K562 (cell line): ENCODE measurements at regions of chr13 and their contacts with region 1.

Region 1: DNA sequence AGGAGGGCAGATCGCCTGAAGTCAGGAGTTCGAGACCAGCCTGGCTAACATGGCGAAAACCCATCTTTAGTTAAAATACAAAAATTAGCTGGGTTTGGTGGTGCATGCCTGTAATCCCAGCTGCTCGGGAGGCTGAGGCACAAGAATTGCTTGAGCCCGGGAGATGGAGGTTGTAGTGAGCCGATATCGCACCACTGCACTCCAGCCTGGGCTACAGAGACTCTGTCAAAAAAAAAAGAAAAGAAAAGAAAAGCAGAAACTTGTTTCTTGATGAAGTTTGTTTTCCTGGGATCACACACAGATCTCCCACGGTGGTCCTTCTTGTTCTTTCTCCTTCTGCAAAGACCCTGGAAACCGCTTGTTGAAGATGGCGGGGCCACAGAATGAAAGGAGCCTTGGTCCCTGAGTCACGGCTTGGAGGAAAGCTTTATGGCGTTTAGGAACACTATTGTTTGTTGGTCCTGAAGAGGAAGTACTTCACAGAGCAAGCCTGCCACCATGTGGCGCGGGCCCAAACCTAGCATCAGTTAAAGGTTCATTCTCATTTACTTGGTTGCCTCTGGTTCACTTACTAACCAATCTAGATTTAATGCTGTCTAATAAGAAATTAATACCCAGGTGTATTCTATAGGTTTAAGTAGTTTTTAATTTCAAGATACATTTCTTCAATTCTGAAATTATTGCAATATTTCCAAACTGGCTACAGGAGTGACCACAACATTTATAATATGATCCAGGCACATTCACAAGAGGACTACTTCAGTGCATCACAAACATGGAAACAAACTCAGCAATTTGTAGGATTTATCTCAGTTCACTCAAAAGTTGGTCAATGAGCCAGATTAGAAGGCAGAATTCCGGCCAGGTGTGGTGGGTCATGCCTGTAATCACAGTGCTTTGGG is 21.3 kb upstream of the ARL11 start:
- DNase-seq: peak; percentile 55 to 87 (median 64)
- ATAC-seq: peak; percentile 98
- H3K4me3 ChIP-seq: 0 out of 2 replicates have a peak overlapping the region, but pooled peaks have one; percentile 19
- H3K27ac ChIP-seq: no peak overlapping the region
- H3K4me1 ChIP-seq: no peaks in the 10 kb centered on the region; a peak in 2 of 5 replicates
- H3K27me3 ChIP-seq: no peaks in the 10 kb centered on the region
- CTCF ChIP-seq: peak; percentile 71 to 84 (median 73)
- EP300 ChIP-seq: 0 out of 2 replicates have a peak, but pooled peaks have one; percentile 21
- POLR2A ChIP-seq: no peak
- RAD21 ChIP-seq: peak; percentile 81 to 92

Region 2: DNA sequence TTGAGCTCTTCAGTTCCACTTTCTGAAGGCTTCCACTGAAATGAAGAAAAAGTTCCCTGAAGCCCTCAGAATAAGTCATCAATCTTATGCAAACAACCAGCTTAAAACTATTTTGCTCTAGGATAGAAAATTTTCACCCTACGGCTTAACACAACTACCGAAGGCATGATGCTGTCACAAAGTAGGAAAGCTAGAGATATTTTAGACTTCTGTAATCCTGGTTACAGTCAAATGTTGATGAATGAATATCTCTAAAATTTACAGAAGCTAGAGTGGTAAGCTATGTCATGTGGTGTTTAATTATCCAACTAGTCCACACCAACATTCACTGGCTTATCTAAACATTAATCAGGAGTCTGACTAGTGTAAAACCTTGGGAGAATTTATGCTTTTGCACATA is 1803.9 kb before region 1 on chr13:
- CTCF ChIA-PET with region 1: no interaction called
- POLR2A ChIA-PET with region 1: no interaction called
- in situ Hi-C with region 1: no loop called
- intact Hi-C with region 1: no loop called
- DNase-seq: no peak
- ATAC-seq: no peak
- H3K4me3 ChIP-seq: no peak overlapping the region
- H3K27ac ChIP-seq: no peak overlapping the region
- H3K4me1 ChIP-seq: no peaks in the 10 kb centered on the region
- H3K27me3 ChIP-seq: no peaks in the 10 kb centered on the region
- CTCF ChIP-seq: no peak
- EP300 ChIP-seq: no peak
- POLR2A ChIP-seq: no peak
- RAD21 ChIP-seq: no peak

Region 3: GRCh38 chr13:49300739-49301589 is 306.0 kb before region 1 on chr13:
- CTCF ChIA-PET with region 1: interaction called, 11 read pairs
- POLR2A ChIA-PET with region 1: no interaction called
- in situ Hi-C with region 1: loop called (anchors 5 kb)
- intact Hi-C with region 1: loop called (anchors 1 kb)
- DNase-seq: peak; percentile 69 to 77 (median 70)
- ATAC-seq: peak; percentile 93
- H3K4me3 ChIP-seq: no peak overlapping the region
- H3K27ac ChIP-seq: no peak overlapping the region
- H3K4me1 ChIP-seq: peaks cover 2 to 4% of the 10 kb centered on the region in 2 experiments; a peak in 3 of 5 replicates
- H3K27me3 ChIP-seq: no peaks in the 10 kb centered on the region
- CTCF ChIP-seq: peak; percentile 70 to 87 (median 82)
- EP300 ChIP-seq: no peak
- POLR2A ChIP-seq: no peak
- RAD21 ChIP-seq: peak; percentile 88 to 94

Region 4: DNA sequence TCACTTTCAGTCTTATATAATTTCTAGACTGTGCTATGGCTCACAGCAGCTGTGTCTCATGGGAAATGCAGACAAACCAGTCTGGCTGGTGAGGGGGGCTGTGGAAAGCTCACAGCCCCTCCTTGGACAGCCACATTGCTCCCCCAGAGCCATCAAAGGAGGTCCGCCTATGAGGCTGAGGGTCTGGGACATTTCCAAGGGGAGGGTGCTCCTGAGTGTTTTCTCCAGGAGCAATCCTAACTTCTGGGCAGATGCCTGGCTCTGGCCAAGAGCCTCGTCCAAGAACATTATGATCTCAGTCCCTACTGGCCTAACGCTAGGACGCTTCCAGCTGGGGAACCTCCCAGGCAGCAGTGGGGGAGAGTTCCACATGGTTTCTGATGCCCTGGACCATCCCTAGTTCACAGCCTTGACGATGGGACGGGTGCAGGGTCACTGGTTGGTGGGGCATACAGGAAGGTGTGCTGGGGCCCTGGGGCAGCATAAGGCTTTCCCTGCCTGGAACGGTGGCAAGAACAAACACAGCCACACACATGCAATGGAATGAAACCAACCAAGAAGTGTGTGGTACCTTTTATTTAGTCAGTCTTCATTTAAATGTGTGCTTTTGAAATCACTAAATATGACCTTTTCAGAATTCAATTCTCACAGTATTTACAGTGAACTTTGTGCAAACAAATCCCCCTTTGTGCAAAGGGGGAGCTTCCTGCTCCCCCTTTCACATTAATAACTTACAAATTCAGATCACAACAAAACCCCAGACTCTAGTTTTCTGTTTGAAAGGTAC is 298.7 kb before region 1 on chr13:
- CTCF ChIA-PET with region 1: no interaction called
- POLR2A ChIA-PET with region 1: no interaction called
- in situ Hi-C with region 1: loop called (anchors 5 kb)
- intact Hi-C with region 1: no loop called
- DNase-seq: no peak
- ATAC-seq: no peak
- H3K4me3 ChIP-seq: no peak overlapping the region
- H3K27ac ChIP-seq: no peak overlapping the region
- H3K4me1 ChIP-seq: peaks cover 0 to 6% of the 10 kb centered on the region in 2 experiments; a peak in 3 of 5 replicates
- H3K27me3 ChIP-seq: no peaks in the 10 kb centered on the region
- CTCF ChIP-seq: no peak
- EP300 ChIP-seq: no peak
- POLR2A ChIP-seq: no peak
- RAD21 ChIP-seq: no peak

Region 5: GRCh38 chr13:49421391-49421790 is 185.6 kb before region 1 on chr13:
- CTCF ChIA-PET with region 1: no interaction called
- POLR2A ChIA-PET with region 1: no interaction called
- in situ Hi-C with region 1: loop called (anchors 10 kb)
- intact Hi-C with region 1: loop called (anchors 2 kb)
- DNase-seq: peak; percentile 7 to 55 (median 24)
- ATAC-seq: peak; percentile 96
- H3K4me3 ChIP-seq: no peak overlapping the region
- H3K27ac ChIP-seq: no peak overlapping the region
- H3K4me1 ChIP-seq: no peaks in the 10 kb centered on the region
- H3K27me3 ChIP-seq: no peaks in the 10 kb centered on the region
- CTCF ChIP-seq: peak; percentile 33 to 47 (median 38); a peak in 3 of 6 replicates
- EP300 ChIP-seq: no peak
- POLR2A ChIP-seq: no peak
- RAD21 ChIP-seq: peak in 1 of 2 experiments; percentile 58; a peak in 2 of 4 replicates

Region 6: GRCh38 chr13:49444524-49445395 is 162.2 kb before region 1 on chr13:
- CTCF ChIA-PET with region 1: no interaction called
- POLR2A ChIA-PET with region 1: interaction called, 3 read pairs
- in situ Hi-C with region 1: no loop called
- intact Hi-C with region 1: loop called (anchors 5 kb)
- DNase-seq: peak in 3 of 4 experiments; percentile 9 to 59 (median 10)
- ATAC-seq: peak; percentile 49
- H3K4me3 ChIP-seq: peak overlapping the region; percentile 81
- H3K27ac ChIP-seq: peak overlapping the region; percentile 91
- H3K4me1 ChIP-seq: peaks cover 0 to 6% of the 10 kb centered on the region in 2 experiments; a peak in 2 of 5 replicates
- H3K27me3 ChIP-seq: no peaks in the 10 kb centered on the region
- CTCF ChIP-seq: no peak
- EP300 ChIP-seq: no peak
- POLR2A ChIP-seq: no peak; the same call in none of the 2 replicates
- RAD21 ChIP-seq: no peak

Region 7: DNA sequence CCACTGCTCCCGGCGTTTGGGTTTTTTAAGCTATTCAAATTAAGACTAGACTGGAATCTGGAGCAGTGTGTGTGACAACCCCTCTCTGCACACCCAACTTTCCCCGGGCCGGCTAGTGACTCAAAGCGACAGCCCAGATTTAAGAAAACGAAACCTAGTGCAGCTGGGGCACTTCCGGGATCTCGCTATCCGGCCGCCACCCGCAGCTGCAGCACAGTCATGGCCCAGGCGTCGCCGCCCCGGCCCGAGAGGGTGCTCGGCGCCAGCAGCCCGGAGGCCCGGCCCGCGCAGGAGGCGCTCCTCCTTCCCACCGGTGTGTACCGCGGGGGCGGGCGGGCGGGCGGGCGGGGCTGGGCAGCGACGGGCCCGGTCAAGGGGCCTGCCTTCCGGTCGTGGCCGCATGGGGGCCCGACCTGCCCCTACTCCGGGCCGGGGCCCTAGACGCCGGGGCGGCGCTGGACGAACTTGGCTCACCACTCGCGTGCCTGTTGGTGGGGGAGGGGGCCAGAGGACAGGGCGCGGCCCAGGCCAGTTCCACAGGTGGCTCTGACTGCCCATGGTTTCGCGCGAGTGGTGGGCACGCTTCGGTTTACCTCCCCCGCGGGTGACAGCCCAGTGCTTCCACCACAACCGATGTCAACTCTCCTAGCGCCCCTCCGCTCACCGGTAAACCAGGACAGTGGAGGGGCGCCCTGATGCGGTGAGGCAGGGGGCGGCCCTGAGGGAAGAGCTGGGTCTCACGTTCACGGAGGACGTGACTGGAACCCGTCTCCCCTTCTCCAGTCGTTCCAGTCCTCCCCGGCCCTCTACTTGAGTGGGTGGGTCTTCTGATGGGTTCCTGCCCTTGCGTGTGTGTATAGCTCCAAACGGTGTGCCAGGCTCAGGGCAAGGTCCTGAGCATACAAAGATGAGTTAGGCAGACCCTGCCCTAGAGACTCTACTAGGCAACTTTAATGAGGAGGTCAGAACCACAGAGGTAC is 110.9 kb before region 1 on chr13 and contains the start of gene PHF11:
- CTCF ChIA-PET with region 1: no interaction called
- POLR2A ChIA-PET with region 1: no interaction called
- in situ Hi-C with region 1: no loop called
- intact Hi-C with region 1: loop called (anchors 1 kb)
- DNase-seq: peak; percentile 69 to 83 (median 77)
- ATAC-seq: peak; percentile 92
- H3K4me3 ChIP-seq: peak within 1 kb of the TSS; percentile 42
- H3K27ac ChIP-seq: peak within 1 kb of the TSS; percentile 76
- H3K4me1 ChIP-seq: peaks cover 6 to 12% of the 10 kb centered on the region in 2 experiments; a peak in 4 of 5 replicates
- H3K27me3 ChIP-seq: no peaks in the 10 kb centered on the region
- CTCF ChIP-seq: no peak
- EP300 ChIP-seq: no peak
- POLR2A ChIP-seq: peak; percentile 58; the same call in 1 of the 2 replicates
- RAD21 ChIP-seq: no peak
- polyA plus RNA-seq, gene PHF11: 1.9 to 2.2 TPM